ENCODE measurements at regions of chr10 and their contacts with region 1.

Region 1: DNA sequence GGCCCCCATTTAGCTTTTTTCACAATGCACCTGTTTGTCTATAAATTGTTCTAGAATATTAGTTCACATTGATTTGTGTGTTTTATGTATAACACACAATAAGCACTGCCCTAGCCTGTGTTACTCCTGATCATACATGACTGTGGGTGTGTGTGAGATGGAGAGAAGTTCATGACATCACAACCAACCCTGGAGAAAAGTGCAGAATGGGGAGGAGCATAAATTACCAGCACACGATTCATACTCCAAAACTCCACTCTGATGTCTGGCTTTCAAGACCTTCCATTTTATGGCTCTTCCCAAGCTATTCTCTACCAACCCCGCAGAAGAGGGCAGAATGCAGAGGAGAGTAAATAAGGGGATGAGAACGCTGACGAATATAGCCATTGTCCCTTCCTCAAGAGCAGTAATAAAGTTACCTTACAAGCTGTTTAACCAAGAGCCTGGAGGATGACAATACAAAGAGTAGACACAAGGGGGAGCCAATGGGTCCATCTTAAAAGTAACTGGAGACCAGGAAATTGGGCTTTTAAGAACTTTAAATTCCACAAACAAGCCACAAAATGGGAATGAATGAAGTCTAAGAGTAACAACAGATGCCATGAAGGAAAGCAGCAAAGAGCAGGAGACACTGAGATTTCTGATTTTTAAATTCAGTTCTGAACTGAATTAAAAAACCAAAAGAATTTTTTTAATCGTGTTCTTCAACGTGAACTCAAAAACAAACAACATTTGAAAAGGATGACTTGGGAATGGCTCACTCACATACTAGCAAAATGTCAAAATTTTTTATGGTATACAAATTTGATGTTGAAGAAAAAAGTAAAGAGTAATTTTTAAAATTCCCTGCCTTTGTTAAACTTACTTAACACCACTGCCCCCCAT is 159.6 kb downstream of the PARD3 start:
- DNase-seq: peak; percentile 33
- H3K4me3 ChIP-seq: no peak overlapping the region
- CTCF ChIP-seq: peak; percentile 67

Region 2: GRCh38 chr10:34565934-34566333 is 89.6 kb before region 1 on chr10:
- CTCF ChIA-PET with region 1: no interaction called
- POLR2A ChIA-PET with region 1: no interaction called
- DNase-seq: no peak
- H3K4me3 ChIP-seq: no peak overlapping the region
- CTCF ChIP-seq: no peak

Region 3: GRCh38 chr10:34606890-34607289 is 48.6 kb before region 1 on chr10:
- CTCF ChIA-PET with region 1: no interaction called
- POLR2A ChIA-PET with region 1: no interaction called
- DNase-seq: no peak
- H3K4me3 ChIP-seq: no peak overlapping the region
- CTCF ChIP-seq: no peak

Region 4: DNA sequence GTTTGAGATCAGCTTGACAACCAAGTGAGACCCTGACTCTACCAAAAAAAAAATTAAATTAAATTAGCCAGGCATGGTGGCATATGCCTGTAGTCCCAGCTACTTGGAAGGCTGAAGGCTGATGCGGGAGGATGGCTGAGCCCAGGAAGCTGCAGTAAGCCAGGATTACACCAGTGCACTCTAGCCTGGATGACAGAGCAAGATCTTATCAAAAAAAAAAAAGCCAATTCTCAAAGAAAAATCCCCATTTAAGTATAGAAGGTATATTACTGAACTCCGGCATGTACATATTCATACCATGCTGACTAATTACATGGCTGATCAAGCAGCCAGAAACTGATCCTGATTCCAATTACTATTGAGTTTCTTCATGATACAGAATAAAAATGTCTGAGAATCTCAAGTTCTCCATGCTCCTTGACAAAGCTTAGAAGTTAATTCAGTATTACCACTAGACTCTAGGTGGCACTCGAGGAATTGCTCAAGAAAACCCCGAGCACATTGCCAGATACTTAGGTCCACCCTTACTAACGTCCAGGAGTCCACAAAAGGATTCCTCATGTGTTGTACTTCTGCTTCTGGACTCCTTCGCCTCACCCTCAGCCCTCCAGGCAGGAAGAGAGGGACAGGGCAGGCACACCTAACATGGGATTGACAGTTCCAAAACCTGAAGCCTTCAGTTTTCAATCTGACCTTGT is 10.6 kb after region 1 on chr10:
- CTCF ChIA-PET with region 1: interaction called, 22 read pairs
- POLR2A ChIA-PET with region 1: interaction called, 3 read pairs
- DNase-seq: peak; percentile 70
- H3K4me3 ChIP-seq: no peak overlapping the region
- CTCF ChIP-seq: peak; percentile 50

Region 5: GRCh38 chr10:34969141-34969540 is 313.6 kb after region 1 on chr10:
- CTCF ChIA-PET with region 1: interaction called, 12 read pairs
- POLR2A ChIA-PET with region 1: no interaction called
- DNase-seq: no peak
- H3K4me3 ChIP-seq: no peak overlapping the region
- CTCF ChIP-seq: no peak

Region 6: GRCh38 chr10:34994565-34995142 is 339.1 kb after region 1 on chr10:
- CTCF ChIA-PET with region 1: interaction called, 11 read pairs
- POLR2A ChIA-PET with region 1: no interaction called
- DNase-seq: no peak
- H3K4me3 ChIP-seq: no peak overlapping the region
- CTCF ChIP-seq: peak; percentile 34

Measured in AG04449 (cell line).